Endothelial cell of umbilical vein (primary cell): ENCODE measurements at regions of chr5 and their contacts with region 1.

Region 1: GRCh38 chr5:923281-923873 is 30.7 kb downstream of the TRIP13 start:
- DNase-seq: peak; percentile 60
- H3K4me3 ChIP-seq: no peak overlapping the region
- H3K27ac ChIP-seq: no peak overlapping the region
- H3K4me1 ChIP-seq: peaks cover 4% of the 10 kb centered on the region
- H3K27me3 ChIP-seq: peaks cover 2 to 10% of the 10 kb centered on the region in 2 experiments
- CTCF ChIP-seq: peak; percentile 95 to 98
- POLR2A ChIP-seq: no peak

Region 2: DNA sequence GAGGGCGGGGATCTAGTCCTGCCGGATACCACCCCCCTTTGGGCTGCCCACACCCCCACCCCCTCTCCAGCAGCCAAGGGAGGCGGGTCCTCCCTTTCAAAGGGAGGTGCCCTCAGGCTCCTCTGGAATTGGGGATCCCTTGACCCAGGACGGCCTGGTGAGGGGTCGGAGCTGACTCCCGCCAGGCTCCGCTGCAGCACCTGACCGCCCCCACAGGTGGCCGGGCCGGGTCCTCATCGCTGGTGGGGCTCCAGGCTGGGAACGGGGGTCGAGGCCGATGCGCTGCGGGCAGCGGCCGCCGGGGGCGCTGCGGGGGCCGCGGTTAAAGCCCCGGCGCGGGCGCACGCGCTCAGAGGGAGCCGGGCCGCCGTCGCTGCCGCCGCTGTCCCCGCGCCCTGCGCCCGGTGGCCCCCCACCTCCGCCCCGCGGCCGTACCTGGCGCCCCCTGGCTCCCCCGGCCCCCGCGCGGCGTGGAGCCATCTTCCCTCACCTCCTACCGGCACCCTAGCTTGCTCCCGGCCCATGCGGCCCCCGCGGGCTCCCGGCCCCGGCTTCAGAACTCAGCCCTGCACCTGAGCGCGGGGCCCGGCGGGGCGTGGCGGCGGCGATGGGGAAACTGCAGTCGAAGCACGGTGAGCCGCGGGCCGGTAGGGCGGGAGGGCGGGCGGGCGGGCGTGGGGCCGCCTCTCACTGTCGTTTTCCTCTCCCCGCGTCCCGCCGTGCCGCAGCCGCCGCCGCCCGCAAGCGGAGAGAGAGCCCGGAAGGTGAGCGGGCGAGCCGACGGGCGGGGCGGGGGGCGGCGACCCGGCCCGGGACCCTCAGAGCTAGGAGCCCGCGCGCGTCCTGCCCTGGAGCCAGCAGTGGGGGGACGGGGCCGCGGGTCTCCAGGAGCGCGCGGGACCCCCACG is 85.3 kb after region 1 on chr5 and contains the start of gene NKD2:
- CTCF ChIA-PET with region 1: interaction called, 4 read pairs
- POLR2A ChIA-PET with region 1: no interaction called
- dilution Hi-C with region 1: no loop called
- intact Hi-C with region 1: loop called (anchors 1 kb)
- DNase-seq: peak; percentile 10
- H3K4me3 ChIP-seq: peak within 1 kb of the TSS in 1 of 3 experiments; percentile 27
- H3K27ac ChIP-seq: no peak within 1 kb of the TSS
- H3K4me1 ChIP-seq: no peaks in the 10 kb centered on the region
- H3K27me3 ChIP-seq: peaks cover 25 to 26% of the 10 kb centered on the region in 2 experiments
- CTCF ChIP-seq: peak; percentile 63 to 66
- POLR2A ChIP-seq: no peak
- total RNA-seq, gene NKD2: not detected in 2 replicates

Region 3: DNA sequence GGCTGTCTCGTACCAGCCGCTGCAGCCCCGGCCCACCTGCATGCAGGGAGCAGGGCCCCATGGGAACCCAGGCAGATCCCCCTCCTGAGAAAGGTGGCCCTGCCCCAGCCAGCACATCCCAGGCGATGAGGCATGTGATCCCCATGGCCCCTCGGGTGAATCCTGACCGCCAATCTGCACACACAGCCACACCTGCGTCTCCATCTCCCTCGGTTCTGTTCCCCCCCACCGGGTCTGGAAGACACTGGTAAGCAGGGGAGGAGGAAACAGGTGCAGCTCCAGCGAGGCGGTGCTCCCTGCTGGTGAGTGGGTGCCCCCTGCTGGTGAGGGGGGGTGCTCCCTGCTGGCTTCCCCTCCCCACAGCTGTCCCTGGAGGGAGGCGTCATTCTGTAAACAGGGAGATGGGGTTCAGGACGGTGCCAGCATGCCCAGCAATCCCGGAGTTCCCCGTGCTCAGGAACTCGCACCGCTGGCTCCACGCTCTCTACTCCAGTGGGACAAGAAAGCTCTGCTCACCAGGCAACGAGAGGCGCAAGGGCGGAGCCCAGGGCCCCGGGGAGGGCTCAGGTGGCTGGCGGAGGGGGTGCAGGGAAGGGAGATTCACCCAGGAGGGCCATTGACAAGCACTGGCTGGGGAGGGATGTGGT is 216.9 kb after region 1 on chr5:
- CTCF ChIA-PET with region 1: interaction called, 39 read pairs
- POLR2A ChIA-PET with region 1: no interaction called
- dilution Hi-C with region 1: no loop called
- intact Hi-C with region 1: loop called (anchors 1 kb)
- DNase-seq: peak; percentile 42
- H3K4me3 ChIP-seq: no peak overlapping the region
- H3K27ac ChIP-seq: no peak overlapping the region
- H3K4me1 ChIP-seq: peaks cover 2% of the 10 kb centered on the region
- H3K27me3 ChIP-seq: no peaks in the 10 kb centered on the region
- CTCF ChIP-seq: peak; percentile 63 to 91
- POLR2A ChIP-seq: no peak

Region 4: DNA sequence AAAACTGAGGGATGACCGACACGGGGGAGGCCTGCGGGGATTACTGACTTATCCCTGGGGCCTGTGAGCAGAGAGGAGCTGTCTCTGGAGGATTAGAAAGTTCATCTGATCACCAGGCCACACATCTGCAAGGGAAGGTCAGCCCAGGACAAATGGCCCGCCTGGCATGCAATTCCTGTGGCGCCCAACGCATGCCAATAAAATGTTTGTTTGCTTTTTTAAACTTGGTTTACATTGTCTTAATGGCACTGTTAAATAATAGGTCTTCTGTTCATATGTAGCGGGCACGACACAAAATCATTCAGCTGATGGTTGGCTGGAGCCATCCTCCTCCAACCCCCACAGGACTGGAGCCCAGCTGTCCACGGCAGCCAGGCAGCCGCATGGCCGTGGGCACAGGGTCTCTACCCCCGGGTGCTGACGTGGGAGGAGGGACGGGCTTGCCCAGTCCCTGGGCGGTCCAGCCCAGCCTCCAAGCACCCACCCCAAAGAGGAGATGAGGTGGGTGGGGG is 229.4 kb after region 1 on chr5:
- CTCF ChIA-PET with region 1: no interaction called
- POLR2A ChIA-PET with region 1: no interaction called
- dilution Hi-C with region 1: no loop called
- intact Hi-C with region 1: no loop called
- DNase-seq: no peak
- H3K4me3 ChIP-seq: no peak overlapping the region
- H3K27ac ChIP-seq: no peak overlapping the region
- H3K4me1 ChIP-seq: no peaks in the 10 kb centered on the region
- H3K27me3 ChIP-seq: peaks cover 20 to 23% of the 10 kb centered on the region in 2 experiments
- CTCF ChIP-seq: no peak
- POLR2A ChIP-seq: no peak

Region 5: GRCh38 chr5:1167728-1168709 is 244.6 kb after region 1 on chr5:
- CTCF ChIA-PET with region 1: interaction called, 44 read pairs
- POLR2A ChIA-PET with region 1: no interaction called
- dilution Hi-C with region 1: no loop called
- intact Hi-C with region 1: loop called (anchors 1 kb)
- DNase-seq: peak; percentile 56
- H3K4me3 ChIP-seq: no peak overlapping the region
- H3K27ac ChIP-seq: no peak overlapping the region
- H3K4me1 ChIP-seq: no peaks in the 10 kb centered on the region
- H3K27me3 ChIP-seq: no peaks in the 10 kb centered on the region
- CTCF ChIP-seq: peak; percentile 61 to 78
- POLR2A ChIP-seq: no peak

Region 6: GRCh38 chr5:1174122-1174936 is 251.0 kb after region 1 on chr5:
- CTCF ChIA-PET with region 1: interaction called, 44 read pairs
- POLR2A ChIA-PET with region 1: no interaction called
- dilution Hi-C with region 1: no loop called
- intact Hi-C with region 1: loop called (anchors 2 kb)
- DNase-seq: peak; percentile 63
- H3K4me3 ChIP-seq: no peak overlapping the region
- H3K27ac ChIP-seq: no peak overlapping the region
- H3K4me1 ChIP-seq: no peaks in the 10 kb centered on the region
- H3K27me3 ChIP-seq: no peaks in the 10 kb centered on the region
- CTCF ChIP-seq: peak; percentile 80 to 84
- POLR2A ChIP-seq: no peak